AG04449 (cell line): ENCODE measurements at regions of chr4 and their contacts with region 1.

Region 1: GRCh38 chr4:82462415-82462831 is 32.0 kb downstream of the ENOPH1 start:
- DNase-seq: peak; percentile 34
- H3K4me3 ChIP-seq: no peak overlapping the region
- CTCF ChIP-seq: peak; percentile 81

Region 2: DNA sequence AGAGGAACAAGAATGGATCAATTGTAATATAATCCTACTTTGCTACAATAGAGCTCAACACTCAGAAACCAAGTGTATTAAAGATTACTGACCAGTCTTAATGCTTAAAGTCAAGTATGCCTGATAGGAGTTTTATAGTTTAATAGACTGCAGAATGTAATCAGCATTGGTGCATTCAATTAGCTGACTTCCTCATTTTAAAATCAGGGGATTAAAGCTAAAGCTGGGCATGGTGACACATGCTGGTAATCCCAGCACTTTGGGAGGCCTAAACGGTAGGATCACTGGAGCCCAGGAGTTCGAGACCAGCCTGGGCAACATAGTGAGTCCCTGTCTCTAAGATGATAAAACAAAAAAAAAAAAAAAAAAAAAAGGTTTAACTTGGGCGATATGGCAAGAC is 43.0 kb before region 1 on chr4:
- CTCF ChIA-PET with region 1: no interaction called
- POLR2A ChIA-PET with region 1: no interaction called
- DNase-seq: no peak
- H3K4me3 ChIP-seq: no peak overlapping the region
- CTCF ChIP-seq: no peak

Region 3: GRCh38 chr4:82450966-82451755 is 11.3 kb before region 1 on chr4:
- CTCF ChIA-PET with region 1: interaction called, 30 read pairs
- POLR2A ChIA-PET with region 1: no interaction called
- DNase-seq: no peak
- H3K4me3 ChIP-seq: no peak overlapping the region
- CTCF ChIP-seq: no peak

Region 4: GRCh38 chr4:82798168-82799005 is 336.0 kb after region 1 on chr4 and contains the start of gene SCD5:
- CTCF ChIA-PET with region 1: interaction called, 26 read pairs
- POLR2A ChIA-PET with region 1: interaction called, 3 read pairs
- DNase-seq: peak; percentile 34
- H3K4me3 ChIP-seq: peak within 1 kb of the TSS; percentile 81
- CTCF ChIP-seq: no peak